Prostate gland (tissue), 2 donors: ENCODE measurements at regions of chr12 and their contacts with region 1.

Region 1: GRCh38 chr12:2267703-2268501 is 215.1 kb downstream of the CACNA1C start:
- DNase-seq: no peak
- H3K4me3 ChIP-seq: no peak overlapping the region
- H3K27ac ChIP-seq: peak overlapping the region in 1 of 2 donors; percentile 38
- H3K4me1 ChIP-seq: no peaks in the 10 kb centered on the region
- H3K27me3 ChIP-seq: no peaks in the 10 kb centered on the region
- CTCF ChIP-seq: no peak
- POLR2A ChIP-seq: no peak

Region 2: GRCh38 chr12:2124466-2125023 is 143.4 kb before region 1 on chr12:
- intact Hi-C with region 1: loop called (anchors 5 kb)
- DNase-seq: no peak
- H3K4me3 ChIP-seq: no peak overlapping the region
- H3K27ac ChIP-seq: no peak overlapping the region
- H3K4me1 ChIP-seq: no peaks in the 10 kb centered on the region
- H3K27me3 ChIP-seq: no peaks in the 10 kb centered on the region
- CTCF ChIP-seq: no peak
- POLR2A ChIP-seq: no peak

Region 3: GRCh38 chr12:2179953-2180736 is 87.8 kb before region 1 on chr12:
- intact Hi-C with region 1: loop called (anchors 5 kb)
- DNase-seq: peak; percentile 18
- H3K4me3 ChIP-seq: no peak overlapping the region
- H3K27ac ChIP-seq: peak overlapping the region; percentile 20 to 27
- H3K4me1 ChIP-seq: no peaks in the 10 kb centered on the region
- H3K27me3 ChIP-seq: no peaks in the 10 kb centered on the region
- CTCF ChIP-seq: no peak
- POLR2A ChIP-seq: no peak

Region 4: GRCh38 chr12:2583091-2583497 is 315.2 kb after region 1 on chr12:
- intact Hi-C with region 1: loop called (anchors 10 kb)
- DNase-seq: peak; percentile 36
- H3K4me3 ChIP-seq: no peak overlapping the region
- H3K27ac ChIP-seq: no peak overlapping the region
- H3K4me1 ChIP-seq: no peaks in the 10 kb centered on the region
- H3K27me3 ChIP-seq: no peaks in the 10 kb centered on the region
- CTCF ChIP-seq: peak; percentile 75 to 96 (median 87)
- POLR2A ChIP-seq: no peak

Region 5: GRCh38 chr12:2988494-2988893 is 720.6 kb after region 1 on chr12:
- intact Hi-C with region 1: no loop called
- DNase-seq: no peak
- H3K4me3 ChIP-seq: no peak overlapping the region
- H3K27ac ChIP-seq: no peak overlapping the region
- H3K4me1 ChIP-seq: no peaks in the 10 kb centered on the region
- H3K27me3 ChIP-seq: no peaks in the 10 kb centered on the region
- CTCF ChIP-seq: no peak
- POLR2A ChIP-seq: no peak